ENCODE measurements at regions of chr4 and their contacts with region 1.

Region 1: DNA sequence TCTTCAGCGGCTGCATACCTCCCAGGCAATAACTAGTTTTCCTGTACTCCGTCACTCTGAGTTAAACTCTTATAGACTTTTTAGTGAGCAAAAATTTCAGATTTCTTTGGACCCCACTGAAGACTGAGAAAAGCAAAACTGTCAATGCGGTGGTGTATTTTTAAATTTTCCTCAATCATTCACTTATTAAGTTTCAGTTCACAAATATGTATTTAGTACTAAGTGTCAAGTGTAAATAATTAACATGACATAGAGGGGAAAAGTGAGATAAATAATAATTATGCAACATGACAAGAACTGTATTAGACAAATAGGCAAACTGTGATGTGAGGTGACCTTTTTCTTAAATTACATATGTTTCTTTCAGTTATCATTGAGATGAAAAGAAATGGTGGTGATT is 124.4 kb downstream of the NAF1 start:
- DNase-seq: no peak
- ATAC-seq: no peak
- H3K4me3 ChIP-seq: no peak overlapping the region
- H3K27ac ChIP-seq: no peak overlapping the region
- H3K4me1 ChIP-seq: no peaks in the 10 kb centered on the region
- H3K27me3 ChIP-seq: no peaks in the 10 kb centered on the region
- CTCF ChIP-seq: no peak
- EP300 ChIP-seq: no peak
- POLR2A ChIP-seq: no peak
- RAD21 ChIP-seq: no peak

Region 2: GRCh38 chr4:162469977-162470376 is 572.3 kb before region 1 on chr4:
- CTCF ChIA-PET with region 1: no interaction called
- POLR2A ChIA-PET with region 1: no interaction called
- in situ Hi-C with region 1: no loop called
- intact Hi-C with region 1: no loop called
- DNase-seq: no peak
- ATAC-seq: no peak
- H3K4me3 ChIP-seq: no peak overlapping the region
- H3K27ac ChIP-seq: no peak overlapping the region
- H3K4me1 ChIP-seq: no peaks in the 10 kb centered on the region
- H3K27me3 ChIP-seq: peaks cover 0 to 1% of the 10 kb centered on the region in 2 experiments; a peak in 1 of 5 replicates
- CTCF ChIP-seq: no peak
- EP300 ChIP-seq: no peak
- POLR2A ChIP-seq: no peak
- RAD21 ChIP-seq: no peak

Region 3: DNA sequence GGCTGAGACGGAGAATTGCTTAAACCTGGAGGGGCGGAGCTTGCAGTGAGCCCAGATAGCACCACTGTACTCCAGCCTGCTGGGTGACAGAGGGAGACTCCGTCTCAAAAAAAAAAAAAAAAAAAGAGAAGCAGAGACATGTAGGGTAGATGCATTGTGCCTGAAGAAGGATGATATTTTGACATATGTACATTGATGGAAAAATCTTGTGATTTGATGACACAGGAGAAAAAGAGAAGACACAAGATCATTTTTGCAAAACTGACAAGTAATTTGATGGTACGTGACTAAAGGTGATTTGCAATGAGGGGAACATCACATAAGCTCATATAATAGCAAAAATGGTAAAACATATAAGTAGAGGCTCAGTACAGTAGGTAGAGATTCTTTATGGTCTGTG is 538.4 kb before region 1 on chr4:
- CTCF ChIA-PET with region 1: no interaction called
- POLR2A ChIA-PET with region 1: no interaction called
- in situ Hi-C with region 1: loop called (anchors 5 kb)
- intact Hi-C with region 1: no loop called
- DNase-seq: no peak
- ATAC-seq: no peak
- H3K4me3 ChIP-seq: no peak overlapping the region
- H3K27ac ChIP-seq: no peak overlapping the region
- H3K4me1 ChIP-seq: no peaks in the 10 kb centered on the region
- H3K27me3 ChIP-seq: no peaks in the 10 kb centered on the region
- CTCF ChIP-seq: no peak
- EP300 ChIP-seq: no peak
- POLR2A ChIP-seq: no peak
- RAD21 ChIP-seq: no peak

Measured in HepG2 (cell line).